RWPE1 (cell line): ENCODE measurements at regions of chrX and their contacts with region 1.

Region 1: DNA sequence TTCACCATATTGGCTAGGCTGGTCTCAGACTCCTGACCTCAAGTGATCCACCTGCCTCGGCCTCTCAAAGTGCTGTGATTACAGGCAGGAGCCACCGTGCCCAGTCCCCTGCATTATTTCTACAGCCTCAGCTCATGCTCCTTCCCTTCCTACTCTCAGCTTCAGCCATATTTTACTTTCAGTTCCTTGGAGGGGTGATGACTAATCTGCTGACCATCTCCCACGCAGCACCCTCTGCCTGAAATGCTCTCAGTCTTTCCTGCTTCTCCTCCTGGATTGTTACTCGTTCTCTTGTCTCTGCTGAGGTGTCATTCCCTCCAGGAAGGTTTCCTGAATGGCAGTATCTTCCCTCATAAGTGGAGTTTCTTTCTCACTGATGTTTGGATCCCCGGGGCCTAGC is 63.3 kb downstream of the MOSPD2 start:
- DNase-seq: peak; percentile 38
- H3K27ac ChIP-seq: no peak overlapping the region
- CTCF ChIP-seq: no peak

Region 2: DNA sequence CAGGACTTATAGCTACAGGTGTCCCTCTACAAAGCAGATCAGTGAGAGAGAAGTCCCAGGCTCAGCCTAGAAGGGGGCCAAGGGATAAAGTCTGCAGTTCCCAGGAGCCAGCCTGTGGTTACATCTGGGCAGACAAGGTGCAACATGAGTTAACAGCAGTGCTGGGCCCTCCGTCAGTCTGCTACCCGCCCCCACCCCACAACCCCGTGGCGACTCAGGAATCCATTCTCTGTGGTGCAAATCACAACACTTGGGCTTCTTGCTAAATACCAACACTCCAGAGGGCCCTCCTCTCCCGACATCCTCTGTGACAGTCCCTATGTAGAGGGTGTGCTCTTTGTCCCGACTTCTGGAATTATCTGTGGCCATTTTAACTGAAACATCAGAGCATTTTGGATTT is 1133.4 kb before region 1 on chrX:
- CTCF ChIA-PET with region 1: interaction called, 10 read pairs
- POLR2A ChIA-PET with region 1: no interaction called
- DNase-seq: no peak
- H3K27ac ChIP-seq: no peak overlapping the region
- CTCF ChIP-seq: no peak

Region 3: DNA sequence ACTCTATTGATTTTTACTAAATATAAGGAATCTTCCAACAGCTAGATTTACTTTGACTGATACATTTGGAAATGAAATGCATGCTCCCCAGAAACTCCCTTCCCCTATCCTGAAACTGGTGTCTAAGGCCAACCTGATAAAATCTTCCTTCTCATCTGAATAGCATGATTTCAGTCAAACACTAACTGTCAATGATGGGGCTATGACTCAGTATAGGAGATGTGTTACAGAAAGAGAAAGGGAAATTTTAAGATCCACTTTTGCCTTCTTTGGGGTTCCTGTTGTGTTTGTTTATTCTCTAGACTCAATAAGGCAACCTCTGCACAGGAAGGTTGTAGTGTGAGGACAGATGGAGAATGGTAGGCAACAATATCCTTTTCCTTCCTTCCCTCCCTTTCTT is 97.4 kb after region 1 on chrX:
- CTCF ChIA-PET with region 1: no interaction called
- POLR2A ChIA-PET with region 1: no interaction called
- DNase-seq: no peak
- H3K27ac ChIP-seq: no peak overlapping the region
- CTCF ChIP-seq: no peak

Region 4: GRCh38 chrX:15098505-15098904 is 161.9 kb after region 1 on chrX:
- CTCF ChIA-PET with region 1: no interaction called
- POLR2A ChIA-PET with region 1: no interaction called
- DNase-seq: no peak
- H3K27ac ChIP-seq: no peak overlapping the region
- CTCF ChIP-seq: no peak

Region 5: GRCh38 chrX:15242899-15243555 is 306.5 kb after region 1 on chrX:
- CTCF ChIA-PET with region 1: no interaction called
- POLR2A ChIA-PET with region 1: no interaction called
- DNase-seq: peak; percentile 11
- H3K27ac ChIP-seq: no peak overlapping the region
- CTCF ChIP-seq: peak; percentile 60